SK-MEL-5 (cell line): ENCODE measurements at regions of chr3 and their contacts with region 1.

Region 1: DNA sequence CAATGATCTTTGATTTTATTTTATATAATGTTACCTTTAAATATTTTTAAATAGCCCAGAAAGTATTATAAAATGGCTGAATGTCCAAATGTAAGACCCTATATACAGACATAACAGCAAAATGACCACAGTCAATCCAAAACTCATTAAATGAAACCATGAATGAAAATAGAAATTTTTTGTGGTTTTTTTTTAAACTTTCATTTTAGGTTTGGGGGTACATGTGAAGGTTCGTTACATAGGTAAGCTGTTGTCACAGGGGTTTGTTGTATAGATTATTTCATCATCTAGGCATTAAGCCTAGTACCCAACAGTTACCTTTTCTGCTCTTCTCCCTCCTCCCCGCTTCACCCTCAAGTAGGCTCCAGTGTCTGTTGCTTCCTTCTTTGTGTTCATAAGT is 108.8 kb downstream of the FAIM start:
- DNase-seq: no peak

Region 2: DNA sequence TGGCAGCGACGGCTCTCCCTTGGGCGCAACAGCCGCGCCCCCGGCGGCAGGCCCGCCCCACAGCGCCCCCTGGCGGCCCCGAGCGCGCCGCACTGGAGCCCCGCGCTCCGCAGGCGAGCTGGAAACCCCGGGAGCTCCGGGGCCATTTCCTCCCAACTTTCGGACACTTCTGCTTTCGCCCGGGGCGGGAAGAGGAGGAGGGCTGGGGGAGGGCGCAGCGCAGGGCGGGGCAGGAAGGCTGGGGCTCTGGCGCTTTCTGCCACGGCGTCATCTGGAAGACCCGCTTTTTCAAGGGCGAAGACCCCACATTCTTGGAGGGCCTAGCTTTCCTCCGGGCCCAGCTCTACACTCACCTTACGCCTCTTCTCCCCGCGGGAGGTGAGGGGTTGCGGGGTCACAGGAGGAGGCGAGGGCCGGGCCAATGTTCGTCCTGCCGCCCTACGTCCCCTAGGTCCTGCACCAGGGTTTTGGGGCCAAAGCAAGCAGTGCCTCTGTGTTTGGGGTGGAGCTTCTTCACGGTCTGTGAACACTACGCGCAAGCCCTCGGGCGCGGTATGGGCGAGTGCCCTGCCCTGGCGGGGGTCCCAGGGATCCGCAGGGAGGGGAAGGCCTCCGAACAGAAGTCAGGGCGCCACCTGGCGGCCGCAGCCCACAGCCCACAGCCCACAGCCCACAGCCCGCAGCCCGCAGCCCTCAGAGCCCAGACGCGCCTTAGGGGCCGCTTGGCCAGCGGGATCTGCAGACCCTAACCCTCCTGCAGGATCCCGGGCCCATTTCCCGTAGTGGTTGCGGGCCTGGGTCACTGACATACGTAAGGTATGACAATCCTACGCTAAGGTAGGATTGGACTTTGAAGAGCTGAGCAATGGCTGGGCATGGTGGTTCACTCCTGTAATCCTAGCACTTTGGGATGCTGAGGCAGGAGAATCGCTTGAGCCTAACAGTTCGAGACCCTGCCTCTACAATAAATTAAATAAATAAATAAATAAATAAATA is 198.5 kb after region 1 on chr3:
- in situ Hi-C with region 1: loop called (anchors 25 kb)
- DNase-seq: peak; percentile 91